GM12878 (cell line): ENCODE measurements at regions of chr11 and their contacts with region 1.

Region 1: GRCh38 chr11:126440792-126441514 is 85.5 kb downstream of the ST3GAL4 start:
- DNase-seq: no peak
- ATAC-seq: peak; percentile 92
- H3K4me3 ChIP-seq: no peak overlapping the region
- H3K27ac ChIP-seq: no peak overlapping the region
- H3K4me1 ChIP-seq: no peaks in the 10 kb centered on the region
- H3K27me3 ChIP-seq: no peaks in the 10 kb centered on the region; a peak in 1 of 4 replicates
- CTCF ChIP-seq: peak; percentile 90 to 93 (median 92); a peak in 5 of 6 replicates
- EP300 ChIP-seq: no peak
- POLR2A ChIP-seq: no peak
- RAD21 ChIP-seq: peak; percentile 94

Region 2: DNA sequence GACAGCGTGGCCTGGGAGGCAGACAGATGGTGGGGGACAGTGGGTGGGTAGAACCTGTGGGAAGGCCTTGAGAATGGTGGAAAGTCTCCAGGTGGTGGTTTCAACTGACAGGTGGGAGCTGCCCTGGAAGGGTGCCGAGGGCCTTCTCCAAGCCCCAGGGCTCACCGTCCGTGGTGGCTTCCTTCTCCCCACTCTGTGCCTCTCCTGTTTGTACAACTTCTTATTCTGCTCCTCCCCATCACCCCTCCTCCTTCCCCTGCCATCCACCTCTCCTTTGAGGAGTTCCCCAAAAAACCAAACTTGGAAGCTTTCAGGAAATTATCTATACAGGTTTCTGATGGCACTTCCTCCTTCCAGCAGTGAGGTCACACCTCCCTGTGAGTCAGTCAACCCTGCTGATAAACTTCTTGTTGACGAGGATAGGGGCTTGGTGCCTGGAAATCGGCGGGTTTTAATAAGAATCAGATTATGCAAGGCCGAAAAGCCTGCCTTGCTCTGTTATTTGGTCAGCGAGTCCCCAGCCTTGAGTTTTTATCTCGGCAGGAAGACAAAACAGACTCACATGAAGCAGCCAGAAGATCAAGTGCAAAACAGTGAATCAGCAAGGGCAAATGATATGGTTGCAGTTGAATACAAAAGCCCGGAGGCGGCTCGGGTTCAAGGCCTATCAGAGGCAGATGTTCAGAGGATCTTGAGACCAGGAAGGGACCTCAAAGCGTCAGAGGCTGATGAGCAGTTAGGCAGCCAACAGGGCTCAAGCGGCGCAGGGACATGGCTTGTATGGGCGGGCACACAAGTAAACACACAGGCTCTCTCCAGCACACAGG is 95.0 kb before region 1 on chr11:
- CTCF ChIA-PET with region 1: no interaction called
- POLR2A ChIA-PET with region 1: no interaction called
- RAD21 ChIA-PET with region 1: no interaction called
- SMC1A ChIA-PET with region 1: no interaction called
- in situ Hi-C with region 1: no loop called
- intact Hi-C with region 1: no loop called
- DNase-seq: no peak
- ATAC-seq: no peak
- H3K4me3 ChIP-seq: no peak overlapping the region
- H3K27ac ChIP-seq: no peak overlapping the region
- H3K4me1 ChIP-seq: peaks cover 5% of the 10 kb centered on the region; the same call in 1 of the 2 replicates
- H3K27me3 ChIP-seq: no peaks in the 10 kb centered on the region
- CTCF ChIP-seq: no peak
- EP300 ChIP-seq: no peak
- POLR2A ChIP-seq: no peak
- RAD21 ChIP-seq: no peak

Region 3: DNA sequence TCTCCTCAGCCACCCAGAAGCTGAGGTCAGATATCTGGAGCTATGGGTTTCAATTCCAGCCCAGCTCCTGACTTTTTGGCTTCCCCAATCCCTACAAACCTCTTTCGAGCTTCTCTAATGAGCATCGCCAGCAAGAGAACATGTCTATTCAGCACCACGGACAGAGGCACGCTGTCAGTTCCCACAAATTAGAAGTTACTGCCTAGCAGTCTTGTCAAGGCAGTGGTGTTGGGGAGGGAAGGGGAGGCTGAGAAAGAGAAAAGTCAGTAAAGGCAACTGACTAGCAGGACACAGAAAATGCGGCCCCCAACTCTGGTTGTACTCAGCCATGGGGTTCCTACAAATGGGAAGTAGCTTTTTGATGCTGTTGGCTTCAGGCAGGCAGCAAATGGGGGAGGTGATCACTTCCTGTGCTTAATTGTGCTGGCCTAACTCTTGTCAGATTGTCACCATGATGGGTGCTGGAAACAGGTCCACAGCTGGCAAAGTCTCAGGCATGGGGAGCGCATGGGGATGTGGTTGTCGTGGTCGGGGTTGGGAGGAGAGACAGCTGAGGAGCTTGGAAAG is 120.5 kb after region 1 on chr11:
- CTCF ChIA-PET with region 1: no interaction called
- POLR2A ChIA-PET with region 1: no interaction called
- RAD21 ChIA-PET with region 1: no interaction called
- SMC1A ChIA-PET with region 1: no interaction called
- in situ Hi-C with region 1: no loop called
- intact Hi-C with region 1: loop called (anchors 10 kb)
- DNase-seq: no peak
- ATAC-seq: no peak
- H3K4me3 ChIP-seq: no peak overlapping the region
- H3K27ac ChIP-seq: no peak overlapping the region
- H3K4me1 ChIP-seq: no peaks in the 10 kb centered on the region
- H3K27me3 ChIP-seq: peaks cover 0 to 3% of the 10 kb centered on the region in 2 experiments; a peak in 2 of 4 replicates
- CTCF ChIP-seq: no peak
- EP300 ChIP-seq: no peak
- POLR2A ChIP-seq: no peak
- RAD21 ChIP-seq: no peak

Region 4: GRCh38 chr11:126862664-126863243 is 421.8 kb after region 1 on chr11:
- CTCF ChIA-PET with region 1: no interaction called
- POLR2A ChIA-PET with region 1: no interaction called
- RAD21 ChIA-PET with region 1: no interaction called
- SMC1A ChIA-PET with region 1: no interaction called
- in situ Hi-C with region 1: no loop called
- intact Hi-C with region 1: loop called (anchors 10 kb)
- DNase-seq: no peak
- ATAC-seq: peak; percentile 80
- H3K4me3 ChIP-seq: no peak overlapping the region
- H3K27ac ChIP-seq: no peak overlapping the region
- H3K4me1 ChIP-seq: peaks cover 5% of the 10 kb centered on the region
- H3K27me3 ChIP-seq: peaks cover 0 to 4% of the 10 kb centered on the region in 2 experiments; a peak in 2 of 4 replicates
- CTCF ChIP-seq: peak in 2 of 3 experiments; percentile 32 to 39; a peak in 3 of 6 replicates
- EP300 ChIP-seq: no peak
- POLR2A ChIP-seq: no peak
- RAD21 ChIP-seq: peak; percentile 34; the same call in 1 of the 2 replicates

Region 5: DNA sequence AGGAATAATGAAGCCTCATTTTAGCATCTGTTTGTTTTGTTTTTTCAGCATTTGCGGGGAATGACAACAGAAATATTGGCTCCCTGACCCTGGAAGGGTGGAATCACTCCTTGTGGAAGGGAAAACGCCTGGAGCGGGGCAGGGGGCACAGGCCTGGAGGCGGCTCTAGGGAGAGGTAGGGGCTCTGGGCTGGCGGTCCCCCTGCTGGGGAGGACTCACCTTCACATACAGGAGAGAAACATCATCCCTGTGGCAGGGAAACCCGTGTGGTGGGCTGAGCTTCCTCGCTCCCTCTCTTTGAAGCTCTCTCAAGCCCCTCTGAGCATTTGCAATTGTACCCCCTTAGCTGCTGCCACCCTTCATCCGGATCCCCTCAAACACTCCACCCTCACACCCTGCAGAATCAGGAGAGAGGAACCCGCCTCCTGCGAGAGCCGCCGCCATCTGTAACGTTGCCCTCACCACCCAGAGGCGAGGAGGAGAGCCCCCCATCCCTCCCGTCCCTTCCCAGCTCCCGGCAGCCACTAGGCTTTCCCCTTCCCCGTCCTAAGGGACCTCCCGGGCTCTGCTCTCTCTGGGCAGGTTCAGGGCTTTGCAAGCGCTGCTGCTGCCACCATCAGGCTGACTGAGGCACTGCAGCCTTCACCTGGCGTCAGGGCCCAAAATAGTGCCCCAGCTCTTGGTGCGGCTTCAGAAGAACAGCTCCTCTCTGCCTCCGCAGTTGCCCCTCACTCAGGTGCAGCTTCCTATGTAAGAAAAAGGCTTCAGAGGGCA is 549.2 kb after region 1 on chr11:
- CTCF ChIA-PET with region 1: interaction called, 7 read pairs
- POLR2A ChIA-PET with region 1: no interaction called
- RAD21 ChIA-PET with region 1: no interaction called
- SMC1A ChIA-PET with region 1: no interaction called
- in situ Hi-C with region 1: loop called (anchors 10 kb)
- intact Hi-C with region 1: loop called (anchors 1 kb)
- DNase-seq: no peak
- ATAC-seq: peak; percentile 98
- H3K4me3 ChIP-seq: no peak overlapping the region
- H3K27ac ChIP-seq: no peak overlapping the region
- H3K4me1 ChIP-seq: no peaks in the 10 kb centered on the region
- H3K27me3 ChIP-seq: peaks cover 0 to 12% of the 10 kb centered on the region in 2 experiments; a peak in 3 of 4 replicates
- CTCF ChIP-seq: peak; percentile 94 to 98 (median 94)
- EP300 ChIP-seq: no peak
- POLR2A ChIP-seq: no peak
- RAD21 ChIP-seq: peak; percentile 90

Region 6: DNA sequence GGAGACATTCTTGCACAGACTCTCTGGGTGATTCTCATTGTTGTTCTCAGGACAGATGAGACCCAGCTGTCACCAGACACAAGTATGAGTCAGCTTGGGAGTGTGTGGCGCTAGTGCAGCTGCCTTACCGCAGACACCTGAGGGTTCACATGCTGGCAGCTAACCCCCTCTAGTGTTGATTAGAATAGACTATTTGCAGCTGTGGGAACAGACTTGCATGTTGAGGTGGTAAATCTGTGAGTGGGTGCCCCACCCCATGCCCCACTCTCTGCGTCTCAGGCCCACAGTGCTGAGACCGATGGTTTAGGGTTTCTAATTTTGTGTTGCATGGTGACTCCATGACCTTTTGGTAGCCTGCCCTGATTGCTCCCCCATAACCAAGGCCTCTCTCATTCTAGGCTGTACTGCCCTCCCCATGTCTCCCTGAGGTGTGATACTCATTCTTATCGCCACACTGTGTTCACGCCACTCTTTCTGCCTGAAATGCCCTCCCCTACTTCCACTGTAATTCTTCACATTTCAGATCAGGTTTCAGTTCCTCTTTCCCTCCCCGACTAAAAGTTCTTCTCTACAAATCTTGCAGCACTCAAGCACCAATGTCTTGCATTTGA is 633.3 kb after region 1 on chr11:
- CTCF ChIA-PET with region 1: interaction called, 5 read pairs
- POLR2A ChIA-PET with region 1: no interaction called
- RAD21 ChIA-PET with region 1: no interaction called
- SMC1A ChIA-PET with region 1: no interaction called
- in situ Hi-C with region 1: no loop called
- intact Hi-C with region 1: loop called (anchors 2 kb)
- DNase-seq: peak; percentile 76
- ATAC-seq: peak; percentile 97
- H3K4me3 ChIP-seq: no peak overlapping the region
- H3K27ac ChIP-seq: no peak overlapping the region
- H3K4me1 ChIP-seq: peaks cover 12% of the 10 kb centered on the region
- H3K27me3 ChIP-seq: no peaks in the 10 kb centered on the region; a peak in 2 of 4 replicates
- CTCF ChIP-seq: peak; percentile 60 to 82 (median 64)
- EP300 ChIP-seq: peak; percentile 64 to 65
- POLR2A ChIP-seq: no peak
- RAD21 ChIP-seq: peak; percentile 75

Region 7: GRCh38 chr11:127345819-127346459 is 905.0 kb after region 1 on chr11:
- CTCF ChIA-PET with region 1: interaction called, 12 read pairs
- POLR2A ChIA-PET with region 1: no interaction called
- RAD21 ChIA-PET with region 1: interaction called, 11 read pairs
- SMC1A ChIA-PET with region 1: interaction called, 8 read pairs
- in situ Hi-C with region 1: loop called (anchors 5 kb)
- intact Hi-C with region 1: loop called (anchors 1 kb)
- DNase-seq: no peak
- ATAC-seq: peak; percentile 52
- H3K4me3 ChIP-seq: no peak overlapping the region
- H3K27ac ChIP-seq: no peak overlapping the region
- H3K4me1 ChIP-seq: no peaks in the 10 kb centered on the region
- H3K27me3 ChIP-seq: no peaks in the 10 kb centered on the region; a peak in 1 of 4 replicates
- CTCF ChIP-seq: peak; percentile 67 to 76 (median 74)
- EP300 ChIP-seq: no peak
- POLR2A ChIP-seq: no peak
- RAD21 ChIP-seq: peak; percentile 57

Region 8: DNA sequence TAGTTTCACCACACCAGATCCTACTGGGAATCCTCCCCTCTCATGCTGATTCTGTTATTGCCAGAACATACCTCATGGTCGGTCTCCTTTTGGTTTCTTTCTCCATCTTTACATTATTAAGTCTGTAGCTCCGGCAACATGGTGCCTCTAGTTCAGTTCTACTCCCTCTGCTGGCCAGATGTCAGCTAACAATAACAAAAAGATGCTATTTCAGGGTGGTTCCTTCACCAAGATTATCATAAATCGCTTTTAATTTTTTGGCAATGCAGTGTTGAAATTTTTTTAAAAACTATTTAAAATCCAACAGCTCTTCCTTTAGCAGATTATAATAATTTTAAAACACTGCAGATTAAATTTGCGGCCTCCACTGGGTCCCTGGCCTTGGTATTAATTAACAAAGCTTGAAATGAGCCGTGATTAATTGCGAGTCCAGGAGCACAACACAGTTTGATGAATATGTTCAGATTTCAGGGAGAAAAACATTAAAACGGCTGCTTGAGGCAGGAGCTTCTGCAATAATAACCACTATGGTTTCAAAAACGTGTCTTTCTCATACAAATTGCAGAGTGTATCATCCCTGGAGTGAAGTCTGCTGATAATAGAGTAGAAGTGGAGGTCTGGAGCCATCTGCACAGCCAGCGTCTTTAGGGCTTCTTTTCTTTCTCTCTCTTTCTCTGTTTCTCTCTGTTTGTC is 1052.5 kb after region 1 on chr11:
- CTCF ChIA-PET with region 1: no interaction called
- POLR2A ChIA-PET with region 1: no interaction called
- RAD21 ChIA-PET with region 1: no interaction called
- SMC1A ChIA-PET with region 1: interaction called, 4 read pairs
- in situ Hi-C with region 1: loop called (anchors 10 kb)
- intact Hi-C with region 1: loop called (anchors 2 kb)
- DNase-seq: no peak
- ATAC-seq: peak; percentile 52
- H3K4me3 ChIP-seq: no peak overlapping the region
- H3K27ac ChIP-seq: no peak overlapping the region
- H3K4me1 ChIP-seq: no peaks in the 10 kb centered on the region
- H3K27me3 ChIP-seq: no peaks in the 10 kb centered on the region
- CTCF ChIP-seq: peak; percentile 32 to 48 (median 37); a peak in 5 of 6 replicates
- EP300 ChIP-seq: no peak
- POLR2A ChIP-seq: no peak
- RAD21 ChIP-seq: peak; percentile 34